ENCODE measurements at regions of chr4 and their contacts with region 1.

Region 1: DNA sequence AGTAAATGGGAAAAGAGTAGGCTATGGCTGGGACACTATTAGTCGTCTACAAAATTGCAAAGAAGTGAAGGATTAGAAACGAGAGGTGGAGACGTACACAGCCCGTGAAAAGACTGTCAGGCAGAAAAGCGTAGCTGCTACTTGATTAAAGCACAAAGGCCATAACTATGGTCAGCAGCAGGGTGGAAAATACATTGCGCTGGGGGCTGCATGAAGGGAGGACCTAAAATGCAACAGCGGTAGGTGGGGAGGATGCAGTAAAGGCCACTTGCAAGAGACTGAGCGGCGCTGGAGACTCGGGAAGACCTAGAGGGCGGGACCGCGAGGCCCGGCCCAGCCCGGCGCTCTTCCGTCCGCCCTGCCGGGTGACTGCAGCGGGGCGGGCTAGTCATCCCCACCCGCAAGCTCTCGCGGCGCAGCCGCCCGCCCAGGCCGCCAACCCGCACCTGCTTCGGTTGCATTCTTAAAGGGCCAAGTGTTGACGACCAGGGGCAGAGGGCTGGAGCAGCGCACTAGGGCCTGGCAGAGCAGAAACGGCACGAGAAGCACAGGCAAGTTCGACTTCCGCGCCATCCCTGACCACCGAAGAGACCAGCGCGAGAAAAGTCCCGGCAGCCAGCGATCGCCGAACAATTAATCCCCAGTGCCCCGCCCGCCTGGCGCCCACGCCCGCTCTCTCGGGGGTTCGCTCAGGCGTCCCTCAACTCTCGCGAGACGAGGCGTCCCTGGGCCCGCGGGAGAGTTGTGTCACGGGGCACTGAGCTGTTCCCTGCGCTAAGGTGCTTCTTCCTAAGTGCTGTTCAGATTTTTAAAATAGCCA is at the start of gene AGA:
- DNase-seq: peak; percentile 97
- H3K4me3 Mint-ChIP-seq: peak within 1 kb of the TSS; percentile 86
- H3K27ac Mint-ChIP-seq: peak within 1 kb of the TSS; percentile 89
- H3K4me1 Mint-ChIP-seq: peaks cover 37% of the 10 kb centered on the region
- H3K27me3 Mint-ChIP-seq: no peaks in the 10 kb centered on the region
- total RNA-seq, gene AGA: 21.5 to 23.6 TPM

Region 2: DNA sequence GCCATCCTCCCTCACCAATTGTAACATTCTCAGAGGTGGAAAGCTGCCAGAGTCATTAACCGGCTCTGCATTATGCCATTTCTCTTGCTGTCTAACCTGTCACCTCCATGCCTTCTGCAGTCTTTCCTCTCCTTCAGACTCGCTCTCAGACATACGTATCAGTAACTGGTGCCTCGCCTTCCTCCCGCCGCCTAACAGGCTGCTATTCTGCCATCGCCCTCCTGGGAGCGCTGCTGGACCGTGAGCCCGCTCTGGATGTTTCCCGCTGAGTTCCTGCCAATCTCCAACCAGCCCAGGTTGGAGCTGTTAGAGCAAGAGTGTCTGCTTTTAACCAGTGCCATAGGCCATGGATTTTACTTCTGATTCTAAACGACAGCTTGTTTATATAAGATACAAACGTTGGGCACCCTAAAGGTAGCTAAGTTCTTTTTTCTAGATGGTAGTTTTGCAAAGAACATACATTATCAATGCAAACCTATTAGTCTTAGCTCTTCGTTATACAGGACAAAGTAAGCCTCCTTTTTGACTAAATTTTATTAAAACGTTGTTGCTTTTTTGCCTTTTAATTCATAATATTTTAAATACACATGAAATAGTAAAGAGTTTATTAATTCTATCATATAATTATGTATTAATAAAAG is 191.8 kb before region 1 on chr4:
- CTCF ChIA-PET with region 1: interaction called, 20 read pairs
- POLR2A ChIA-PET with region 1: interaction called, 14 read pairs
- DNase-seq: peak; percentile 80
- H3K4me3 Mint-ChIP-seq: no peak overlapping the region
- H3K27ac Mint-ChIP-seq: no peak overlapping the region
- H3K4me1 Mint-ChIP-seq: peaks cover 11% of the 10 kb centered on the region
- H3K27me3 Mint-ChIP-seq: peaks cover 8% of the 10 kb centered on the region

Region 3: DNA sequence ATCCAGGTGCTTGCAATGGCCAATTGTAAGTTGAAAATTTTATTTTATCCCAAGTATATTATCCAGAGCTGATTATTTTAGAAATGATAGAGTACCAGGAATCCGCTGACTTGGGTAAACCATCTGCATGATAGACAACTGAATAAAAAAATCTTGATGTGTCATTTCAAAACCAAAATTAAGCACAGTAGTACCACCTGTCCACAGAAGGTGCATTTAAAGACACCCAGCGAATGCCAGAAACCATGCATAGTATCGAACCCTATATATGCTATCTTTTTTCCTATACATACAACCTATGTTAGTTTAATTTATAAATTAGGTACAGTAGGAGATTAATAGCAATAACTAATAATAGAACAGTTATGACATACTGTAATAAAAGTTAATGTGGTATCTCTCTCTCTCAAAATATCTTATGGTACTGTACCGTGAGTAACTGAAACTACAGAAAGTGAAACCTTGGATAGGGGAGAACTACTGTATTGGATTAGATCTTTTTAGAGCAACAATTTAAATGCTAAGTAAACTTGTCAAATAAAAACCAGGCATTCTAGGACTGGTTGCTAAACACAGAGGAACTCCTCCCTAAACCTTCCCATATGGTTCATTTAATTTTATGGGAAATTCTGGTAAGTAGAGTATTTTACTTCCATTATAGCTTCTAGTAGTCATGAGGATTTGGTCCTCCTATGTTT is 126.1 kb before region 1 on chr4:
- CTCF ChIA-PET with region 1: interaction called, 3 read pairs
- POLR2A ChIA-PET with region 1: interaction called, 147 read pairs
- DNase-seq: no peak
- H3K4me3 Mint-ChIP-seq: peak overlapping the region; percentile 31
- H3K27ac Mint-ChIP-seq: peak overlapping the region; percentile 34
- H3K4me1 Mint-ChIP-seq: peaks cover 89% of the 10 kb centered on the region
- H3K27me3 Mint-ChIP-seq: no peaks in the 10 kb centered on the region

Region 4: GRCh38 chr4:177401658-177402273 is 40.2 kb before region 1 on chr4:
- CTCF ChIA-PET with region 1: interaction called, 4 read pairs
- POLR2A ChIA-PET with region 1: interaction called, 32 read pairs
- DNase-seq: no peak
- H3K4me3 Mint-ChIP-seq: peak overlapping the region; percentile 31
- H3K27ac Mint-ChIP-seq: peak overlapping the region; percentile 82
- H3K4me1 Mint-ChIP-seq: peaks cover 49% of the 10 kb centered on the region
- H3K27me3 Mint-ChIP-seq: peaks cover 12% of the 10 kb centered on the region

Region 5: GRCh38 chr4:177461606-177462005 is 19.6 kb after region 1 on chr4:
- CTCF ChIA-PET with region 1: no interaction called
- POLR2A ChIA-PET with region 1: interaction called, 11 read pairs
- DNase-seq: no peak
- H3K4me3 Mint-ChIP-seq: no peak overlapping the region
- H3K27ac Mint-ChIP-seq: no peak overlapping the region
- H3K4me1 Mint-ChIP-seq: no peaks in the 10 kb centered on the region
- H3K27me3 Mint-ChIP-seq: no peaks in the 10 kb centered on the region